ENCODE measurements at regions of chr7 and their contacts with region 1.

Region 1: GRCh38 chr7:47239931-47240421 is 341.9 kb downstream of the TNS3 start:
- DNase-seq: no peak
- H3K4me3 ChIP-seq: no peak overlapping the region
- H3K27me3 ChIP-seq: no peaks in the 10 kb centered on the region; the same call in 1 of the 2 replicates
- CTCF ChIP-seq: no peak

Region 2: DNA sequence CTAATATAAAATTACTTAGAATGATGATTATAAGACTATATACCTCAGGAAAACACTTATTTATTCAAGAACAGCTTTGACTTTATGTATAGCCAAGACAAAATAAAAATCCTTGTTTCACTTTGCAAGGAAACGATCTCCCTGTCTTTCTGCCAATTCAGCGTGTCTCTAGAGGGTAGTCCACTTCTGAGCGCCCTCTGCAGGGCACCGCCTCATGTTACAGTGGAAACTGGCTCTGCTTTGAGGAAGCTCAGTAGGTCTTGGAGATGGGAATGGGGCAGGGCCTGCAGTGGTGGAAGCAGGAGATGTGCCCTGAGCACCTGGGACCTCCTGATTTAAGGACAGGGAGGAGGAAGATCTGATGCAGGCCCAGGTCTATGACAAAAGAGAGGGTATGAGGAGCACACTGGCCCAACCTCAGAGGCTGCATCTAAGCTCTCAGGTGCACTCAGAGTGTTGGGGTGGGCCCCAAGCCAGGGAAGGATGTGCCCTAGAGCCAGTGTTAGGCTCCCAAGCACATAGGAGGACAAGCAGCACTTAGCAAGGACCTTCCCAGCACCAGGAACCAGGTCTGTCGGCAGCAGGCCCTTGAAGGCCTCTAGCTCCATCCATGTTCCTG is 139.1 kb before region 1 on chr7:
- CTCF ChIA-PET with region 1: no interaction called
- POLR2A ChIA-PET with region 1: no interaction called
- DNase-seq: no peak
- H3K4me3 ChIP-seq: no peak overlapping the region
- H3K27me3 ChIP-seq: no peaks in the 10 kb centered on the region
- CTCF ChIP-seq: peak; percentile 62

Region 3: DNA sequence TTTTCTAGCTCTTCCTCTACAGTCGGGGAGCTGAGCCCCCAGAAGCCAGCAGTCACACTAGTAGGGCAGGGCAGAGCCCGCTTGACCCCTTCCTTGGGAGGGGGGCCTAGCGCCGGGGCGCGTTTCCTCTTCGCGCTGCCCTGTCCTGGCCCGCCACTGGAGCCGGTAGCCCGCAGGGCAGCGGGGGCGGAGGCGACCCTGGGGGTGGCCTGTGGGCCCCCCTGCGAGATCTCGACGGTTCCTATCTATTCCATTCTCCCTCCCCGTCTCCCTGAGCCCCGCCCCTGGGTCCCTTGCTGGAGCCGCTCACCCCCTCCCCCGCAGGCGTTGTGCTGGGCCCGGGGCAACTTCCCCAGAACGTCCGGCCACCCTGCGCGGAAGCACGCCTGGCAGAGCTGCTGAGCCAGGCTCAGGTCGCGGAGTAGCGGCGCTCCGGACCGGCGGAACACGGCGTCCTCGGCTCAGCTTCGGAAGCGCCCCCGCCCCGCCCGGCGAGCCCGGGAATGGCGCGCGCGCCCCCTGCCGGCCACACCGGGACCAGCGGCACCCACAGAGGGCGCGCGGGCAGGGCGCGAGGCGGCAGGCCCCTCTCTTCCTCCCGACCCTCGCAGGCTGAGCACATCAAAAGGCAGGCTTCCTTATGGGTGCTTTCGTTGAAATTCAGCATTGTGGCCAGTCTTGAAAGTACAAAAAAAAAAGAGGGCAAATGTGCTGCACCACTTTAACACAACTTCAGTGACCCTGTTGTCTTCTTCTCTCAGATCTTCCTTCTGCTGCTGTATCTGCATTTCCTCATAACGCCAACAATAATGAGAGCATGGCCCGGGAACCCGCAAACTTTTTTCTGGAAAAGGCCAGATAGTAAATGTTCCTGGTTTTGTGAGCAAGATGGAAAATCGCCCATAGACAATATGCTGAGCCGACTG is 14.4 kb after region 1 on chr7:
- CTCF ChIA-PET with region 1: interaction called, 25 read pairs
- POLR2A ChIA-PET with region 1: no interaction called
- DNase-seq: no peak
- H3K4me3 ChIP-seq: peak overlapping the region; percentile 57
- H3K27me3 ChIP-seq: no peaks in the 10 kb centered on the region
- CTCF ChIP-seq: peak; percentile 49

Measured in BJ (cell line).